IMR-90 (cell line): ENCODE measurements at regions of chr3 and their contacts with region 1.

Region 1: DNA sequence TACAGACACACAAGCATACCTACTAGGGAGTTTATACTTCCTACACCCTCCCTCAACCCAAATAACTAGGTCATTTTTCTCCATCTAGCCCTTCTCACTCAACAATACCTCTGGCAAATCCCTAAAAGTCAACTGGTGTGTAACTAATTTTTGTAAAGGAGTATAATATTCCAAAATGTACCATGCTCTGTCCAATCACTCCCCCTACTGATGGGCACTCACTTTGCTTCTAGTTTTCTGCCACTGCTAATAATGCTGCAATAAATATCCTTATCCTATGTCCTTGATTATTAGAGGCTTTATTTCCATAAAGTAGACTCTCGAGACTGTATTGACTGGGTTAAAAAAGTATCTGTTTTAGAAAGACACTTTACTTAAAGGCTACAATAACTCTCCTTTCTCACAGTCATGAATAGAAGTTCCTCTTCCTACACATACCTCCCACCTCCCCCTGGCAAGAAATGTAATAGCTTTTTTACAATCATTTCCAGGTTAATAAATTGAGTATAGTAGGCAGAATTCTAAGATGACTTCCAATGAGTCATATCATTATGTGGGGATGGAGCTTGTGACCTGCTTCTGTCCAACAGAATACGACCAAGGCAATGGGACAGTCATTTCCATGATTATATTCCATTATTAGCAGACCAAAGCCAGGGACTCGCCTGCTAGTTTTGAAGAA is 30.0 kb downstream of the SHQ1 start:
- DNase-seq: peak; percentile 36
- ATAC-seq: peak; percentile 42; the same call in 1 of the 2 replicates
- H3K4me3 ChIP-seq: no peak overlapping the region
- H3K27ac ChIP-seq: no peak overlapping the region; the same call in 1 of the 2 replicates
- H3K4me1 ChIP-seq: peaks cover 7% of the 10 kb centered on the region
- H3K27me3 ChIP-seq: no peaks in the 10 kb centered on the region
- CTCF ChIP-seq: peak; percentile 64
- POLR2A ChIP-seq: no peak
- RAD21 ChIP-seq: peak; percentile 78

Region 2: DNA sequence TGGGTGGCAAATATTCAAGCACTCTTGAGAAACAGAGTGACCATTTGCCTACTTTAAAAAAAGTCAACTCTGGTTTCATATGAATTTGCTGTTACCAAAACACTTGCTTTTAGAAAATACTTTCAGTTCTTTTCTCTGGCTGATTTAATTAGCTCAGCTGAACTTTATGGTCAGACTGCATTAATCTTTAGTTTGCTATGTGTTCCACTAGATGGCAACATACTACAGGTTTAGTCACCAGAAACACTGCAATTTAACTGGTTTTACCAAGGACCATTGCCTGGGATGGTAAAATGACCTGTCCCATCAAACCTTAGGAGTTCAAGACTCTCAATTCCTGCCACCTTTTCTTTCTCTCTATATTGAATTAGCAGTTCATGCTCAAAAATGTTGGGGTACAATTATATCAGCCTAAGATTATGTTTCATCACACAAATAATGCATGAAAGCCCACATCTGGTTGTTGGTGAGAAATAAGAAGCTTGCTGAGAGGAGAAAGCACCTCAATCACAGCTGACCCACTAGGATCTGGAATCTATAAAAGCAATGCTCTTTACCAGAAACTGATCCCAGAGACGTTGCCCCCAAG is 1107.2 kb before region 1 on chr3:
- CTCF ChIA-PET with region 1: no interaction called
- POLR2A ChIA-PET with region 1: no interaction called
- dilution Hi-C with region 1: no loop called
- in situ Hi-C with region 1: no loop called
- intact Hi-C with region 1: loop called (anchors 5 kb)
- DNase-seq: peak; percentile 66
- ATAC-seq: peak; percentile 92
- H3K4me3 ChIP-seq: no peak overlapping the region
- H3K27ac ChIP-seq: no peak overlapping the region
- H3K4me1 ChIP-seq: no peaks in the 10 kb centered on the region; the same call in 1 of the 2 replicates
- H3K27me3 ChIP-seq: peaks cover 19% of the 10 kb centered on the region
- CTCF ChIP-seq: peak; percentile 77
- POLR2A ChIP-seq: no peak
- RAD21 ChIP-seq: peak; percentile 76

Region 3: GRCh38 chr3:71875461-71875947 is 942.7 kb before region 1 on chr3:
- CTCF ChIA-PET with region 1: interaction called, 14 read pairs
- POLR2A ChIA-PET with region 1: no interaction called
- dilution Hi-C with region 1: no loop called
- in situ Hi-C with region 1: loop called (anchors 5 kb)
- intact Hi-C with region 1: loop called (anchors 1 kb)
- DNase-seq: peak; percentile 53
- ATAC-seq: peak; percentile 99
- H3K4me3 ChIP-seq: no peak overlapping the region
- H3K27ac ChIP-seq: no peak overlapping the region
- H3K4me1 ChIP-seq: no peaks in the 10 kb centered on the region
- H3K27me3 ChIP-seq: peaks cover 6% of the 10 kb centered on the region
- CTCF ChIP-seq: peak; percentile 81
- POLR2A ChIP-seq: 0 out of 2 replicates have a peak, but pooled peaks have one; percentile 27
- RAD21 ChIP-seq: peak; percentile 84

Region 4: DNA sequence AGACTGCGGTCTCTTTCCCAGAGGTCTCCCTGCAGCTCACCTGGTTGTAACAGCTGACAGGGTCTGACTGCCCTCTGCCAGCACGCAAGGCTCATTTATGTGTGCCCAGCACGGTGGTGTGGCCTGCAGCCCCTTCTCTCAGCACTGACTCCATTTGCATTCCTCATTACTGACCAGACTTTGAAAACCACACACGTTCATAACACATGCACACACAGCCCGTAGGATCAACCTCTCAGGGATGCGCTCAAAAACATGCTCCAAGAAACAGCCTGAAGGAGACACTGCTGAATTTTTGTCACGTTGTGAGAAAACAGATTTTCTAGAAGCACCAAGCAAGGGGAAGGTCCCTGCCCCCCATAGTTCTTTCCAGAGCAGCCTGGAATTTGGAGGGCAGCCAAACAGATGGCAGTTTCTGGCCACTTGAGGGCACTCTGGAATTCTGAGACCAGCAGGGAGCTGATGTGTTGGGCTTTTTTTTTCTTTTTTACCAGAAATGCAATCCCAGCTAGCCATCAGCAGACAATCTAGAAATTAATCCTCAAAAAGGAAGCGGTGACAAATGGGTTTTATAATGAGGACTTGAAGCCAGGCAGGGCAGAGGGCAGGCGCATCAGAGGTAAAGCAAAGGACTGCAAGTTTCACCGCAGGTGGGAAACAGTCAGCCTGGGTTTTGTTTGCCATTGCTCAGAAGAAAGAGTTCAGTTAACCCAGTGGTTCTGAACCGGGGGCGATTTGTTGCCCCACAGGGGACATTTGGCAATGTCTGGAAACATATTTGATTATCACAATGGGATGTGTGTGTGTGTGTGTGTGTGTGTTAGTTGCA is 862.8 kb before region 1 on chr3:
- CTCF ChIA-PET with region 1: interaction called, 3 read pairs
- POLR2A ChIA-PET with region 1: no interaction called
- dilution Hi-C with region 1: no loop called
- in situ Hi-C with region 1: loop called (anchors 10 kb)
- intact Hi-C with region 1: loop called (anchors 1 kb)
- DNase-seq: peak; percentile 70
- ATAC-seq: peak; percentile 85
- H3K4me3 ChIP-seq: no peak overlapping the region
- H3K27ac ChIP-seq: no peak overlapping the region
- H3K4me1 ChIP-seq: no peaks in the 10 kb centered on the region
- H3K27me3 ChIP-seq: peaks cover 12% of the 10 kb centered on the region
- CTCF ChIP-seq: peak; percentile 74
- POLR2A ChIP-seq: no peak
- RAD21 ChIP-seq: peak; percentile 87

Region 5: DNA sequence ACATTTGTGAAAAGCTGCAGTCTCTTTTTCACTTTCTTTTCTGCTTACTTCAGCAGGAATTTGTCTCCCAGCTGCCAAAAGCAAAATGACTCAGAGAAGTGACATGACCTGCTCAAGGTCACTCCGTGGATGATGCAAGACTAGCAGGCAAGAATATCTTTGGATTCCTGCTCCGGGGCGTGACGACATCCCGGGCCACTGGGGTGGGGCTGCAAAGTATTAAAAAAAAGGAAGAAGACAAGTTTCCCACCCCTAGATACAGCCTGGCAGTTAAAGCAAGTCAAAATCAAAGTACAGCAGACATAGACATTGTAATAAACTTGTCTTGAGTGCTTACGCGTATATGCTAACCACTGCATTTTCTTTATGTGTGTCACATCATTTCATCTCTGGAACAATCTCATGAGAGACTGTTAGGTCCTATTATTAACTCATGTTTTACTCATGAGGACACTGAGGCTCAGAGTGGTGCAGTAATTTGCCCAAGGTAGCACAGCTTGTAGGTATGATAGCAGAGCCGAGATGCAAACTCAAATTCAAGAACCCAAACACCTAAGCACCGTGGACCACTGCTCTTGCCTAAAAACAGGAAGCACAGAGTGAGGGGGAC is 548.1 kb before region 1 on chr3:
- CTCF ChIA-PET with region 1: no interaction called
- POLR2A ChIA-PET with region 1: no interaction called
- dilution Hi-C with region 1: no loop called
- in situ Hi-C with region 1: no loop called
- intact Hi-C with region 1: loop called (anchors 5 kb)
- DNase-seq: peak; percentile 96
- ATAC-seq: peak; percentile 41
- H3K4me3 ChIP-seq: no peak overlapping the region
- H3K27ac ChIP-seq: peak overlapping the region; percentile 2; the same call in 1 of the 2 replicates
- H3K4me1 ChIP-seq: peaks cover 21% of the 10 kb centered on the region
- H3K27me3 ChIP-seq: peaks cover 7% of the 10 kb centered on the region
- CTCF ChIP-seq: no peak
- POLR2A ChIP-seq: no peak
- RAD21 ChIP-seq: no peak; the same call in 1 of the 2 replicates

Region 6: DNA sequence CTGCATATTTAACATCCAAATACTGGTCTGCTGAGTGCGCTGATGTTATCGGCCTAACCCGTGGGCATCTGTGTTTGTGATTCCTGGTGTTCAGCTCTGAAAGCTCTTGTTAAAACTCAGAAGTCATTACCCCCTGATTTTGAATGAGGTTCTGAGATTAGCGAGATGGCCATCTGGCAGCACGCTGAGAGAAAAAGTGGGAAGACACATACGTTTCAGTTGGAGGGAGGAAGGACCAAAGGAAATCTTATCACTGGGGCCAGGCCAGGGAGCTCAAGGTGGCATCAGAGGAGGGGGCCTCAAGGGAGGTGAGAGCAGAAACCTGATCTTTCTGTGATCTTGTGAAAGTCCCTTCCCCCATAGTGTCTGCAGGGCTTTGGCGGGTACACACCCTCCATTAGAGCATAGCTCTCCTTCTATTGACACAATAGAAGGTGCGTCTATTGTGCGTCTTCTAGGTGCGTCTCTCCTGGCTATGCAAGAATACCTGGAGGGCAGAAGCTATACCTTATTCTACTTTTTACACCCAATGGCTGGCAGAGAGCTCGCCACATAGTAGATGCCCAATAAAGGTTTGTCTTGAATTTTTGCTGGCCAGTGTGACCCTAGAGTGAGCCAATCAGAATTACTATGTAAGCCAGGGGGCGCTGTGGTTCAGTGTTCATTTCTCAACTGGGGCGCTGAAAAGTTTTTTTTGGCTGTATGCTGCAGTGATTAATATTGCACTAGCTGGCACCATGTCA is 152.4 kb before region 1 on chr3:
- CTCF ChIA-PET with region 1: no interaction called
- POLR2A ChIA-PET with region 1: no interaction called
- dilution Hi-C with region 1: no loop called
- in situ Hi-C with region 1: no loop called
- intact Hi-C with region 1: loop called (anchors 2 kb)
- DNase-seq: no peak
- ATAC-seq: no peak
- H3K4me3 ChIP-seq: no peak overlapping the region
- H3K27ac ChIP-seq: no peak overlapping the region
- H3K4me1 ChIP-seq: no peaks in the 10 kb centered on the region
- H3K27me3 ChIP-seq: peaks cover 1% of the 10 kb centered on the region; the same call in 1 of the 2 replicates
- CTCF ChIP-seq: peak; percentile 38
- POLR2A ChIP-seq: no peak
- RAD21 ChIP-seq: peak; percentile 32; the same call in 1 of the 2 replicates